ENCODE measurements at regions of chr1 and their contacts with region 1.

Region 1: DNA sequence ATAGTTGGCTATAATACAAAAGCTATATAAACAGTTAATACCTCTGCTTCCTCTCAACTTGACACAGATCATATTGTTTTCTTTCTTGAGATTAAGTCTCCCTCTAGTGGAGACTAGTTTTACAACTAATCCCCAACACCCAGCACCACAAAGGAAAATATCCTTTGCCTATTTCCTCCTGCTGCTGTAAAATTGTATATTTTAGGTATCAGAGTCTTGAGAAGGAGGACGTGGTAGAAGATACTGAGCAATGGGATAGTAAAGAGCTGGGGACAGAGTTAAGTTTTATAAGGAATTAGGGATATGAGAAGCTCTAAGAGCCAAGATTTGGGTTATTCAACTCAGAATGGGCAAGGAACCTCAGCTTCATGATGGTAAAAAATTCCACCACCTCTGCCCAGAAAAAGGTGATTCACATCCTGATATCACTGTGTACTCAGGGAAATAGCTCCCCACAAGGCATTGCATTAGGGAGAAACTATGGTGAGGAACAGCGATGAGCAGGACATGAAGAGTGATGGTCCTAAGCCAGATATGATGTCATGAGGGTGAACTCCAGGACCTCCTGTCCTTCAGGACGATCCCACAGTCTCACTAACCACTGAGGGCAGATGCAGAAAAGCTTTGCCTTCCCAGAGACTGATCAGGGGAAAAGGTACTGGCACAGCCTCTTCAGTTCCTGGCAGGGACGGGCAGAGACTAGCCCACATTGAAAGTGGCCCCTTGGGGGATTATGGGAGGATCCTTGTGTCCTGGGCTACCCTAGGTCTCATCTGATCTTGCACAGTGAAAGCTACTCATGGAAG is 14.7 kb upstream of the CFAP126 start:
- DNase-seq: peak; percentile 80
- H3K4me3 ChIP-seq: no peak overlapping the region
- H3K27ac ChIP-seq: peak overlapping the region; percentile 82
- H3K4me1 ChIP-seq: peaks cover 15% of the 10 kb centered on the region
- H3K27me3 ChIP-seq: no peaks in the 10 kb centered on the region
- CTCF ChIP-seq: peak; percentile 24 to 32
- POLR2A ChIP-seq: no peak

Region 2: GRCh38 chr1:161185282-161185682 is 197.1 kb before region 1 on chr1:
- CTCF ChIA-PET with region 1: interaction called, 54 read pairs
- POLR2A ChIA-PET with region 1: interaction called, 3 read pairs
- dilution Hi-C with region 1: no loop called
- intact Hi-C with region 1: no loop called
- DNase-seq: peak; percentile 99
- H3K4me3 ChIP-seq: no peak overlapping the region
- H3K27ac ChIP-seq: peak overlapping the region; percentile 48
- H3K4me1 ChIP-seq: peaks cover 28% of the 10 kb centered on the region
- H3K27me3 ChIP-seq: no peaks in the 10 kb centered on the region
- CTCF ChIP-seq: no peak
- POLR2A ChIP-seq: peak; percentile 37

Region 3: DNA sequence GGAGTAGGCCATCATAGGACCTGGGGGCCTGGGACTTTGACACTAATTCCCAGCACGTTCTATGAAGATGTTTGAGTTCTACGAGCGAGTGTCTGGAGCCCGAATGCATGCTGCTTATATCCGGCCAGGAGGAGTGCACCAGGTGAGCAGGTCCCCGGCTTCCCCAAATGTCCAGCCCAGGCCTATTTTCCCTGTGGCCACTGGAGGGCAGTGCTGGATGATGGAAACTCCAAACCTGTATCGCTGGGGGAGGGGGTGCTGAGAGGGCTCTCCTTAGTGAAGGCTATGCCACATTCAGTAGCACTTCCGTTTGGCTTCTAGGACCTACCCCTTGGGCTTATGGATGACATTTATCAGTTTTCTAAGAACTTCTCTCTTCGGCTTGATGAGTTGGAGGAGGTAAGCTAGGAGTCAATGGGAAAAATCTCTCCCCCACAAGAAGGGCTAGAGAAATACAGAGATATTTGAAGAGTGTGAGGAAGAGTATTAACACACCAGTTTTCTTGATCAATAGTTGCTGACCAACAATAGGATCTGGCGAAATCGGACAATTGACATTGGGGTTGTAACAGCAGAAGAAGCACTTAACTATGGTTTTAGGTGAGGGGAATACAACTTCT is 172.5 kb before region 1 on chr1:
- CTCF ChIA-PET with region 1: interaction called, 28 read pairs
- POLR2A ChIA-PET with region 1: no interaction called
- dilution Hi-C with region 1: no loop called
- intact Hi-C with region 1: loop called (anchors 1 kb)
- DNase-seq: peak; percentile 62
- H3K4me3 ChIP-seq: no peak overlapping the region
- H3K27ac ChIP-seq: no peak overlapping the region
- H3K4me1 ChIP-seq: peaks cover 10% of the 10 kb centered on the region
- H3K27me3 ChIP-seq: no peaks in the 10 kb centered on the region
- CTCF ChIP-seq: peak; percentile 89 to 91
- POLR2A ChIP-seq: no peak

Region 4: DNA sequence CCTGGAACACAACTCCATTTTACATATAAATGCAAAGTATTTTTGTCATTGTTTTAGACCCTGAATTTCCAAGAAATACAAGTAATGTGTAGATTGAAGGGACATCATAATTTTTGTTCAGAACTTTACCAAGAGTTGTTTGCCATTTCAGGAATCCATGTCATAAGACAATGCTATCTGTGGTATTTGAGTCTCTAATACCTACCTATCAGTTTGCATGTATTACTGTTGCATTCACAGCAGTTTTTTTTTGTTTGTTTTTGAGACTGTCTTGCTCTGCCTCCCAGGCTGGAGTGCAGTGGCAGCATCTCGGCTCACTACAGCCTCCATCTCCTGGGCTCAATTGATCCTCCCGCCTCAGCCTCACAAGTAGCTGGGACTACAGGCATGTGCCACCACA is 89.8 kb before region 1 on chr1:
- CTCF ChIA-PET with region 1: interaction called, 18 read pairs
- POLR2A ChIA-PET with region 1: no interaction called
- dilution Hi-C with region 1: no loop called
- intact Hi-C with region 1: loop called (anchors 5 kb)
- DNase-seq: no peak
- H3K4me3 ChIP-seq: no peak overlapping the region
- H3K27ac ChIP-seq: no peak overlapping the region
- H3K4me1 ChIP-seq: no peaks in the 10 kb centered on the region
- H3K27me3 ChIP-seq: peaks cover 5 to 8% of the 10 kb centered on the region in 2 experiments
- CTCF ChIP-seq: no peak
- POLR2A ChIP-seq: no peak

Region 5: DNA sequence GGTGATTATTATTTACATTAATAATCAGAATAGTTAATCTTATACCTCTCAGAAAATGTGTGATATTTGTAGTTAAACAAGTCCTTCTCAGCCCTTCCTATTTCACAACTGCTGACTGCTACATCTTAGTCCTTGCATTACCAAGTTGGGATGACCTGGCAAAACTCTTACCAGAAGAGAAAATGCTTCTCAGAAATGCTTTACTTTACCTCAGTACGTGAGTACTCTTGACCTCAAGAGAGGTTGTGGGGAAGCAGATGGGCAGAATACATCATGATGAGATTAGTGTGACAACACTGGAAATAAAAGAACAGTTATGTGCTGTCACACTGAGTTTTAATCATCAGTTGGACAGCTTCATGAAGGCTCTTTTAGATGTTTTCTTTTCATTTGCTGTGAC is 30.9 kb before region 1 on chr1:
- CTCF ChIA-PET with region 1: interaction called, 15 read pairs
- POLR2A ChIA-PET with region 1: no interaction called
- dilution Hi-C with region 1: no loop called
- intact Hi-C with region 1: no loop called
- DNase-seq: no peak
- H3K4me3 ChIP-seq: no peak overlapping the region
- H3K27ac ChIP-seq: no peak overlapping the region
- H3K4me1 ChIP-seq: no peaks in the 10 kb centered on the region
- H3K27me3 ChIP-seq: no peaks in the 10 kb centered on the region
- CTCF ChIP-seq: no peak
- POLR2A ChIP-seq: no peak

Measured in endothelial cell of umbilical vein (primary cell).